ENCODE measurements at regions of chr13 and their contacts with region 1.

Region 1: DNA sequence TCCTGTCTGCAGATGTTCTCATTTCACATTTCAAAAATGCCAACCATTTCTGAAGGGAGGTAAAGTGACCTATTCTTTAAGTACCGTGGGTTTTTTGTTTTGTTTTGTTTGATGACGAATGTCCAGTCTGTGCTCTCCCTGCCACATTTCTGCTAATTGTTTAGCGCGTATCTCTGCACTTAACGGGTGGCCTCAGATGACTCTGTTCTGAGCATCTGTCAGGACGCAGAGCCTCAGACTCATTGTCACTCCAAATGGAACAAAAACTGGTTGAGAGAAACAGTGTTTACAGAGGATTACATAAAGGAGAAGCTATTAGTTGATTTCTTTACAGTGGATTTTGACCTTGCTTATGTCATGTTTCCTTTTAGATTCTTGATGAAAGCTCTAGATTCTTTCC is 23.7 kb downstream of the TPP2 start:
- DNase-seq: no peak
- ATAC-seq: no peak
- H3K4me3 ChIP-seq: no peak overlapping the region
- H3K27ac ChIP-seq: no peak overlapping the region
- H3K4me1 ChIP-seq: no peaks in the 10 kb centered on the region
- H3K27me3 ChIP-seq: no peaks in the 10 kb centered on the region
- CTCF ChIP-seq: no peak
- EP300 ChIP-seq: no peak
- POLR2A ChIP-seq: no peak
- RAD21 ChIP-seq: no peak

Region 2: DNA sequence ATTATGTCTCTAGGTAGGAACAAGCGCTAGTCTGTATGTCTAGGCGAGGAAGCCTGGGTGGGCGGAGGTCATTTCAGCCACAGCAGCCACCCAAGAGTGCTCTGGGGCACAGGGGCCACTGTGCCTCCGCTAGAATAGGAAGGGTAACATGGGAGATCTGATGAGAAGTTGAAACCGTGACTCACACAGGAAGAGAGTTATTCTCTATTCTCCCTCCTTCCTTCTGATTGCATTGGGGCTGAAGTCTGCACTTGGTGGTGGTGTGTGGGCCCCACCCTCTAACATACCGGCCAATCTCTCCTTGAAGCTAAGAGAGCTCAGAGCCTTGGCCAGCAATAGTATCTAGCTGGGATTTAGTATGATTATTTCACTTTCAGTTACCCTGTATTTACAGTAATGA is 2011.6 kb before region 1 on chr13:
- CTCF ChIA-PET with region 1: no interaction called
- POLR2A ChIA-PET with region 1: no interaction called
- in situ Hi-C with region 1: loop called (anchors 25 kb)
- intact Hi-C with region 1: no loop called
- DNase-seq: peak; percentile 61 to 81 (median 71)
- ATAC-seq: peak; percentile 95
- H3K4me3 ChIP-seq: no peak overlapping the region
- H3K27ac ChIP-seq: peak overlapping the region; percentile 52
- H3K4me1 ChIP-seq: peaks cover 12 to 46% of the 10 kb centered on the region in 2 experiments; a peak in 4 of 5 replicates
- H3K27me3 ChIP-seq: no peaks in the 10 kb centered on the region
- CTCF ChIP-seq: no peak
- EP300 ChIP-seq: peak; percentile 6; the same call in 1 of the 2 replicates
- POLR2A ChIP-seq: 0 out of 2 replicates have a peak, but pooled peaks have one; percentile 21
- RAD21 ChIP-seq: no peak